Ovary (tissue), 10 donors: ENCODE measurements at regions of chr10 and their contacts with region 1.

Region 1: GRCh38 chr10:132036153-132036886 is 29.4 kb upstream of the JAKMIP3 start:
- DNase-seq: peak in 4 of 5 donors; percentile 25 to 60 (median 48)
- H3K4me3 ChIP-seq: peak overlapping the region; percentile 29
- H3K27ac ChIP-seq: no peak overlapping the region
- H3K4me1 ChIP-seq: peaks cover 4% of the 10 kb centered on the region
- H3K27me3 ChIP-seq: no peaks in the 10 kb centered on the region
- CTCF ChIP-seq: no peak
- EP300 ChIP-seq: no peak
- POLR2A ChIP-seq: no peak

Region 2: DNA sequence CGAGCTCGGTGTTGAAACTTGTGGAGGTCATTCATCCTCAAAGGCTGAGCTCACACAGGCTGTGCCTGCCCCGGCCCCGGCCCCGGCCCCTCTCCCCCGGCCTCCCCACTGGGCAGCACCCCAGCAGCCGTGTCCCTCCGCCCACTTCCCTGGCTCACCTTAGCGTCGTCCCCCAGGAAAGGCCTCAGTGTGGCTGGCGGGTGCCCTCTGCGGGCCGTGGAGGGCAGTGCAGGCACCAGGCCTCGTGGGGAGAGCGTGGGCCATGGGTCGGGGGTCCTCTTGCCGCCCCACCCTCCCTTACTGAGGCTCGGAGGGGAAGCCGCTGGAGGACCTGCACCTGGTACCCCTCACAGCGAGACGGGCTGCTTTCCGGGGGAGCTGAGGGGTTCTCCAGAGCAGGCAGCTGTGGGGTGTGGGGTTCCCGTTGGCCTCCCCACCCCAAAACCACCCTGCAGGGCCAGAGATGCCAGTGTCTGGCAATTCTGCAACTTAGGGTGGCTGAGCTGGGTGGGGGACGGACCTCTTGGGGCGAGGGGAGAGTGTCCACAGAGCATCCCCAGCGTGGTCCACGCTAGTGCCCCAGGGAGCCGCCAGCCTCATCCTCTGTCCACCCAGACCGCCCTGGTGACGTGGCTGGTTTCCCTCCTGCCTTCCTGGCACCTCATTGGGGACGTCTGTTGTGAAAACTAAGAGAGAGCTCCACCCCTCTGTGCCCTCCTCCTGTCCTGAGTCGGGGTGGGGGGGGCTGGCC is 106.3 kb after region 1 on chr10:
- intact Hi-C with region 1: loop called in 1 of 4 experiments (anchors 10 kb)
- DNase-seq: peak; percentile 52 to 75 (median 68)
- H3K4me3 ChIP-seq: no peak overlapping the region
- H3K27ac ChIP-seq: peak overlapping the region in 1 of 2 donors; percentile 69
- H3K4me1 ChIP-seq: peaks cover 6% of the 10 kb centered on the region
- H3K27me3 ChIP-seq: no peaks in the 10 kb centered on the region
- CTCF ChIP-seq: peak; percentile 43 to 70 (median 70)
- EP300 ChIP-seq: no peak
- POLR2A ChIP-seq: no peak